ENCODE measurements at regions of chr10 and their contacts with region 1.

Region 1: GRCh38 chr10:91551856-91552255 is 81.0 kb downstream of the PPP1R3C start:
- DNase-seq: peak; percentile 73
- ATAC-seq: peak; percentile 97
- H3K4me3 Mint-ChIP-seq: peak overlapping the region; percentile 17; the same call in 1 of the 2 replicates
- H3K27ac Mint-ChIP-seq: no peak overlapping the region
- H3K4me1 Mint-ChIP-seq: peaks cover 9% of the 10 kb centered on the region
- H3K27me3 Mint-ChIP-seq: peaks cover 7% of the 10 kb centered on the region; the same call in 1 of the 2 replicates
- CTCF ChIP-seq: peak; percentile 46; the same call in 1 of the 2 replicates

Region 2: GRCh38 chr10:91444211-91445182 is 107.4 kb before region 1 on chr10:
- CTCF ChIA-PET with region 1: no interaction called
- POLR2A ChIA-PET with region 1: no interaction called
- DNase-seq: no peak
- ATAC-seq: no peak
- H3K4me3 Mint-ChIP-seq: no peak overlapping the region
- H3K27ac Mint-ChIP-seq: no peak overlapping the region
- H3K4me1 Mint-ChIP-seq: peaks cover 17% of the 10 kb centered on the region
- H3K27me3 Mint-ChIP-seq: no peaks in the 10 kb centered on the region
- CTCF ChIP-seq: no peak

Region 3: GRCh38 chr10:91493313-91493712 is 58.5 kb before region 1 on chr10:
- CTCF ChIA-PET with region 1: interaction called, 14 read pairs
- POLR2A ChIA-PET with region 1: no interaction called
- DNase-seq: no peak
- ATAC-seq: no peak
- H3K4me3 Mint-ChIP-seq: no peak overlapping the region
- H3K27ac Mint-ChIP-seq: no peak overlapping the region
- H3K4me1 Mint-ChIP-seq: peaks cover 4% of the 10 kb centered on the region; the same call in 1 of the 2 replicates
- H3K27me3 Mint-ChIP-seq: no peaks in the 10 kb centered on the region
- CTCF ChIP-seq: no peak

Region 4: GRCh38 chr10:91564508-91564907 is 12.7 kb after region 1 on chr10:
- CTCF ChIA-PET with region 1: interaction called, 14 read pairs
- POLR2A ChIA-PET with region 1: no interaction called
- DNase-seq: no peak
- ATAC-seq: no peak
- H3K4me3 Mint-ChIP-seq: no peak overlapping the region
- H3K27ac Mint-ChIP-seq: no peak overlapping the region
- H3K4me1 Mint-ChIP-seq: peaks cover 6% of the 10 kb centered on the region; the same call in 1 of the 2 replicates
- H3K27me3 Mint-ChIP-seq: no peaks in the 10 kb centered on the region
- CTCF ChIP-seq: no peak

Region 5: GRCh38 chr10:91632671-91633550 is 81.1 kb after region 1 on chr10 and contains the start of gene PPP1R3C:
- CTCF ChIA-PET with region 1: interaction called, 27 read pairs
- POLR2A ChIA-PET with region 1: interaction called, 4 read pairs
- DNase-seq: peak; percentile 85
- ATAC-seq: peak; percentile 90
- H3K4me3 Mint-ChIP-seq: peak within 1 kb of the TSS; percentile 74
- H3K27ac Mint-ChIP-seq: no peak within 1 kb of the TSS
- H3K4me1 Mint-ChIP-seq: peaks cover 13% of the 10 kb centered on the region
- H3K27me3 Mint-ChIP-seq: peaks cover 50% of the 10 kb centered on the region
- CTCF ChIP-seq: no peak
- total RNA-seq, gene PPP1R3C: 1.5 to 3.3 TPM (median 2.8 TPM) in 3 replicates

Region 6: GRCh38 chr10:91682912-91683311 is 131.1 kb after region 1 on chr10:
- CTCF ChIA-PET with region 1: no interaction called
- POLR2A ChIA-PET with region 1: no interaction called
- DNase-seq: no peak
- ATAC-seq: no peak
- H3K4me3 Mint-ChIP-seq: no peak overlapping the region
- H3K27ac Mint-ChIP-seq: no peak overlapping the region
- H3K4me1 Mint-ChIP-seq: peaks cover 19% of the 10 kb centered on the region
- H3K27me3 Mint-ChIP-seq: no peaks in the 10 kb centered on the region
- CTCF ChIP-seq: no peak

Region 7: DNA sequence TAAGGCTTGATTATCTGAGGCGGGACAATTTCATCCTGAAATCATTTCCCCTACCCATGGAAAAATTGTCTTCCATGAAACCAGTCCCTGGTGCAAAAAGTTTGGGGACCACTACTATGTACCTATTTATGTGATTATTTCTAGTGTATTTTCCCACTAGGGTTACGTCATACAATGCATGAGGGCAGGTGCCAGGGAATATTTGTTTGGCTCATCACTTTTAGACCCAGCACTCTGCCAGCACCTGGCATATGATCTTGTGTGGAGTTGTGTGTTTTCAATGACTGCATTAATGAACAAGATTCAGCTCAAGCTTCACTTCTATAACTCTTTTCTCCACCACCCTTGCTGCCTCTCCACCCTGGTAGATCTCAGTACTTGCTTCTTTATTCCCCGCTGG is 173.1 kb after region 1 on chr10:
- CTCF ChIA-PET with region 1: no interaction called
- POLR2A ChIA-PET with region 1: no interaction called
- DNase-seq: no peak
- ATAC-seq: no peak
- H3K4me3 Mint-ChIP-seq: no peak overlapping the region
- H3K27ac Mint-ChIP-seq: no peak overlapping the region
- H3K4me1 Mint-ChIP-seq: no peaks in the 10 kb centered on the region
- H3K27me3 Mint-ChIP-seq: peaks cover 4% of the 10 kb centered on the region; the same call in 1 of the 2 replicates
- CTCF ChIP-seq: no peak

Region 8: DNA sequence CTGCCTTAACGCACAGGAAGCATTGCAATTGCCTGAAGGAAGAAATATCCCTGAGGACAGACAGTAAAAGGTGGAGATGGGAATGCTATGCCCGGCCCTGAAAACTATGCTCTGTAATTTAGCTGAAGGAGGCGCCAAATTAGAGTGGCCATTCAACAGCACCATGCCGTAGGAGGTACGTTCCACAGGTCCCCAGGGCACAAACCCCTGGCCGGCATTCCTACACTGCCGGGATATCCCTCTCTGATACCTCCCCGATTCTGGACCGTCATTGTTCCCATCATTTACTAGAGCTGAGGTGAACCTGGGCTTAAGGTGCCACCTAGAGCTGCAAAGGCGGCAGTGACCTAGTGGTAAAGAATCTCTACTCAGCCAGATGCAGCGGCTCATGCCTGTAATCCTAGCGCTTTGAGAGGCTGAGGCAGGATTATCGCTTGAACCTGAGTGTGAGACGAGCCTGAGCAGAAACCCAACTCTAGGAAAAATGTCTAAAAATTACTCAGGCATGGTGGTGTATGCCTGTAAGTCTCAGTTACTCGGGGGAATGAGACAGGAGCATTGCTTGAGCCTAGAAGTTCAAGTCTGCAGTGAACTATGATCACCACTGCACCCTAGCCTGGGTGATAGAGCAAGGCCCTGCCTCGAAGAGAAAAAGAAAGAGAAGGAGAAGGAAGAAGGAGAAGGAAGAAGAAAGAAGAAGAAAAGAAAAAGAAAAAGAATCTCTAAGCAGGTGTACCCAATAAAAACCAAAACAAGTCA is 193.4 kb after region 1 on chr10:
- CTCF ChIA-PET with region 1: interaction called, 19 read pairs
- POLR2A ChIA-PET with region 1: no interaction called
- DNase-seq: peak; percentile 68
- ATAC-seq: peak; percentile 100
- H3K4me3 Mint-ChIP-seq: peak overlapping the region; percentile 55
- H3K27ac Mint-ChIP-seq: peak overlapping the region; percentile 69; the same call in 1 of the 2 replicates
- H3K4me1 Mint-ChIP-seq: peaks cover 10% of the 10 kb centered on the region
- H3K27me3 Mint-ChIP-seq: peaks cover 13% of the 10 kb centered on the region
- CTCF ChIP-seq: no peak